WTC11 (cell line): ENCODE measurements at regions of chr9 and their contacts with region 1.

Region 1: GRCh38 chr9:89549031-89549644 is 51.2 kb upstream of the SEMA4D start:
- DNase-seq: peak; percentile 82
- ATAC-seq: peak; percentile 73
- H3K4me3 Mint-ChIP-seq: no peak overlapping the region
- H3K27ac Mint-ChIP-seq: no peak overlapping the region
- H3K4me1 Mint-ChIP-seq: peaks cover 34% of the 10 kb centered on the region
- H3K27me3 Mint-ChIP-seq: peaks cover 3% of the 10 kb centered on the region; the same call in 1 of the 2 replicates
- CTCF ChIP-seq: peak; percentile 84

Region 2: GRCh38 chr9:89410641-89411350 is 138.3 kb before region 1 on chr9:
- CTCF ChIA-PET with region 1: interaction called, 27 read pairs
- POLR2A ChIA-PET with region 1: interaction called, 4 read pairs
- DNase-seq: no peak
- ATAC-seq: peak; percentile 27
- H3K4me3 Mint-ChIP-seq: no peak overlapping the region
- H3K27ac Mint-ChIP-seq: peak overlapping the region; percentile 59; the same call in 1 of the 2 replicates
- H3K4me1 Mint-ChIP-seq: peaks cover 49% of the 10 kb centered on the region
- H3K27me3 Mint-ChIP-seq: no peaks in the 10 kb centered on the region; the same call in 1 of the 2 replicates
- CTCF ChIP-seq: no peak

Region 3: DNA sequence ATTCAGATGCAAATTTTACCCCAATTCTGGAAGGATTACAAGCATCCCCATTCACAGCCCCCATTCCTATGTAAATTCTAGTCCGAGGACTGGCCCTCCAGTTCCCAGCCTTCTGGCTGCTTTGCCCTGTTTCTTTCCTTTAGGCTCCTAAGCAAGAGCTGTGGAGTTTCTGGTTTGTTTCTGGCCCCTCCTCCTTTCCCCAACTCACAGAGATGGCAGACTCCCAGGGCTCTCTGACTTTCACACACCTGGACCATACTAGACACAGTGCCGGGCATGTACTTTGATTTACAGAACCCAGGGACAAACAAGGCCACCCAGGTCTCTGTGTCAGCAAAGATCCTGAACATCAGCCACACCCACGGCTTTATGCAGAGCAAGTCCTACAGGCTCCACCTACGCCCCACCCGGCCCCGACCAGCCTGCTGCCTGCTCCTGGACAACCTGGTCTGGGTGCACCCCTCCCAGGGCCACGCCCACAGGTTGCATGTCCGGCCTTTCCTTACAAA is 113.8 kb before region 1 on chr9:
- CTCF ChIA-PET with region 1: interaction called, 135 read pairs
- POLR2A ChIA-PET with region 1: no interaction called
- DNase-seq: peak; percentile 93
- ATAC-seq: peak; percentile 90
- H3K4me3 Mint-ChIP-seq: peak overlapping the region; percentile 62
- H3K27ac Mint-ChIP-seq: peak overlapping the region; percentile 100
- H3K4me1 Mint-ChIP-seq: peaks cover 90% of the 10 kb centered on the region
- H3K27me3 Mint-ChIP-seq: no peaks in the 10 kb centered on the region
- CTCF ChIP-seq: no peak

Region 4: DNA sequence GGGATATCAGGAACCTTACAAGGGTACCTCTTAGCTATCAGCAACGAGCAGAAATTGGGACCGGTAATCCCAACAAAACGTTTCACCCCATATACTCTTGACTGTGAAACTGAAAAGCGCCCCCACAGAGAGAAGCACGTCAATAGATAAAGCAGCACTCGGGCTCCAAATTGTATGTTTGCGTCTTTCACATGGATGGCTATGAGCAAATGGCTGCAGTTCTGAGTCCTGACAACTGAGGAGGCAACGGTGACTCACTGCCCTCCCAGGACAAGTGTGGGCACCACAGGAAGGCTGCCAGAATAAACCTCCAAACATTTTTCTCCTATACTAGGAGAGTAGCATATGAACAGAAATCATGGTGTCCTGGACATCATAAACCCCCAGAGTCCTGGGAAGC is 87.9 kb before region 1 on chr9:
- CTCF ChIA-PET with region 1: interaction called, 11 read pairs
- POLR2A ChIA-PET with region 1: interaction called, 3 read pairs
- DNase-seq: no peak
- ATAC-seq: 0 out of 2 replicates have a peak, but pooled peaks have one; percentile 14
- H3K4me3 Mint-ChIP-seq: no peak overlapping the region
- H3K27ac Mint-ChIP-seq: no peak overlapping the region; the same call in none of the 2 replicates
- H3K4me1 Mint-ChIP-seq: peaks cover 74% of the 10 kb centered on the region
- H3K27me3 Mint-ChIP-seq: no peaks in the 10 kb centered on the region
- CTCF ChIP-seq: no peak

Region 5: GRCh38 chr9:89502038-89502601 is 47.0 kb before region 1 on chr9:
- CTCF ChIA-PET with region 1: interaction called, 12 read pairs
- POLR2A ChIA-PET with region 1: interaction called, 3 read pairs
- DNase-seq: no peak
- ATAC-seq: no peak
- H3K4me3 Mint-ChIP-seq: no peak overlapping the region
- H3K27ac Mint-ChIP-seq: no peak overlapping the region
- H3K4me1 Mint-ChIP-seq: peaks cover 38% of the 10 kb centered on the region
- H3K27me3 Mint-ChIP-seq: no peaks in the 10 kb centered on the region
- CTCF ChIP-seq: no peak

Region 6: DNA sequence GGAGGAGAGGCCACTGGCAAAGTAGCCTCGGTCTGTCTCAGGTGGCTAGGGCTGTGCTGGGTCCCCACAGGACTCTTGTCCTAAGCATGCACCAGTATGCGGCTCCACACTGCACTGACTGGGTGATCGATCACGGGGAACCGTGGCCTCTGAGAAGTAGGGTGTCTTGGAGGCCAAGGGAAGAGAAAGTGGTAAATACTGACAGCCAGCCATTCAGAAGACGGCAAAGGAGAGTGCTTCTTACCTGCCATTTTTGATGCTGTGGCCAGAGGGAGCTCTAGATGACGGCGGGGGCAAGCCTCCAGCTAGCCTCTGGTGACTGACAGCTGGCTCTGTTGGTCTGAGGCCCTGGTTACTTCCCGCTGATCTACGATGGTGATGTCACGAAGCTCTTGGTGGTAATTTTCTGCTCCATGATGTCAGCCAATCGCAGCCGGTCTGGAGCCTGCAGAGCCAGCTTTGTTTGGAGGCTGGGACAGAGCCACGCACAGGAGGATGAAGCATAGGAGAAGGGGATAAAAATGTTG is 15.3 kb after region 1 on chr9:
- CTCF ChIA-PET with region 1: interaction called, 30 read pairs
- POLR2A ChIA-PET with region 1: interaction called, 3 read pairs
- DNase-seq: peak; percentile 63
- ATAC-seq: peak; percentile 98
- H3K4me3 Mint-ChIP-seq: no peak overlapping the region
- H3K27ac Mint-ChIP-seq: peak overlapping the region; percentile 46; the same call in 1 of the 2 replicates
- H3K4me1 Mint-ChIP-seq: peaks cover 14% of the 10 kb centered on the region
- H3K27me3 Mint-ChIP-seq: no peaks in the 10 kb centered on the region
- CTCF ChIP-seq: peak; percentile 29; the same call in 1 of the 2 replicates